PC-3 (cell line): ENCODE measurements at regions of chr5 and their contacts with region 1.

Region 1: GRCh38 chr5:142515036-142515435 is 170.9 kb downstream of the FGF1 start:
- DNase-seq: no peak
- ATAC-seq: no peak
- H3K4me3 ChIP-seq: no peak overlapping the region
- H3K27ac ChIP-seq: no peak overlapping the region
- H3K4me1 ChIP-seq: peaks cover 10% of the 10 kb centered on the region
- H3K27me3 ChIP-seq: no peaks in the 10 kb centered on the region
- CTCF ChIP-seq: no peak

Region 2: GRCh38 chr5:142432369-142432863 is 82.6 kb before region 1 on chr5:
- CTCF ChIA-PET with region 1: no interaction called
- POLR2A ChIA-PET with region 1: no interaction called
- intact Hi-C with region 1: no loop called
- DNase-seq: no peak
- ATAC-seq: no peak
- H3K4me3 ChIP-seq: no peak overlapping the region
- H3K27ac ChIP-seq: no peak overlapping the region
- H3K4me1 ChIP-seq: no peaks in the 10 kb centered on the region
- H3K27me3 ChIP-seq: no peaks in the 10 kb centered on the region
- CTCF ChIP-seq: no peak

Region 3: GRCh38 chr5:142542078-142542477 is 27.0 kb after region 1 on chr5:
- CTCF ChIA-PET with region 1: interaction called, 10 read pairs
- POLR2A ChIA-PET with region 1: no interaction called
- intact Hi-C with region 1: no loop called
- DNase-seq: no peak
- ATAC-seq: no peak
- H3K4me3 ChIP-seq: no peak overlapping the region
- H3K27ac ChIP-seq: no peak overlapping the region
- H3K4me1 ChIP-seq: no peaks in the 10 kb centered on the region; the same call in 1 of the 2 replicates
- H3K27me3 ChIP-seq: no peaks in the 10 kb centered on the region
- CTCF ChIP-seq: no peak

Region 4: GRCh38 chr5:143448518-143448917 is 933.5 kb after region 1 on chr5:
- CTCF ChIA-PET with region 1: no interaction called
- POLR2A ChIA-PET with region 1: no interaction called
- intact Hi-C with region 1: no loop called
- DNase-seq: no peak
- ATAC-seq: no peak
- H3K4me3 ChIP-seq: no peak overlapping the region
- H3K27ac ChIP-seq: no peak overlapping the region
- H3K4me1 ChIP-seq: no peaks in the 10 kb centered on the region
- H3K27me3 ChIP-seq: no peaks in the 10 kb centered on the region
- CTCF ChIP-seq: peak; percentile 36; the same call in 1 of the 2 replicates